ENCODE measurements at regions of chr16 and their contacts with region 1.

Region 1: GRCh38 chr16:28202147-28202746 is 9.5 kb downstream of the XPO6 start:
- DNase-seq: no peak
- H3K4me3 ChIP-seq: no peak overlapping the region
- H3K27ac ChIP-seq: no peak overlapping the region
- H3K4me1 ChIP-seq: no peaks in the 10 kb centered on the region
- H3K27me3 ChIP-seq: no peaks in the 10 kb centered on the region
- CTCF ChIP-seq: no peak
- POLR2A ChIP-seq: no peak

Region 2: GRCh38 chr16:28164140-28164539 is 38.1 kb before region 1 on chr16:
- CTCF ChIA-PET with region 1: interaction called, 3 read pairs
- POLR2A ChIA-PET with region 1: no interaction called
- dilution Hi-C with region 1: no loop called
- intact Hi-C with region 1: loop called (anchors 5 kb)
- DNase-seq: peak; percentile 11
- H3K4me3 ChIP-seq: no peak overlapping the region
- H3K27ac ChIP-seq: no peak overlapping the region
- H3K4me1 ChIP-seq: no peaks in the 10 kb centered on the region
- H3K27me3 ChIP-seq: no peaks in the 10 kb centered on the region
- CTCF ChIP-seq: no peak
- POLR2A ChIP-seq: no peak

Region 3: GRCh38 chr16:28187595-28188004 is 14.6 kb before region 1 on chr16:
- CTCF ChIA-PET with region 1: interaction called, 3 read pairs
- POLR2A ChIA-PET with region 1: no interaction called
- dilution Hi-C with region 1: no loop called
- intact Hi-C with region 1: loop called (anchors 1 kb)
- DNase-seq: no peak
- H3K4me3 ChIP-seq: no peak overlapping the region
- H3K27ac ChIP-seq: no peak overlapping the region
- H3K4me1 ChIP-seq: no peaks in the 10 kb centered on the region
- H3K27me3 ChIP-seq: no peaks in the 10 kb centered on the region
- CTCF ChIP-seq: no peak
- POLR2A ChIP-seq: no peak

Region 4: DNA sequence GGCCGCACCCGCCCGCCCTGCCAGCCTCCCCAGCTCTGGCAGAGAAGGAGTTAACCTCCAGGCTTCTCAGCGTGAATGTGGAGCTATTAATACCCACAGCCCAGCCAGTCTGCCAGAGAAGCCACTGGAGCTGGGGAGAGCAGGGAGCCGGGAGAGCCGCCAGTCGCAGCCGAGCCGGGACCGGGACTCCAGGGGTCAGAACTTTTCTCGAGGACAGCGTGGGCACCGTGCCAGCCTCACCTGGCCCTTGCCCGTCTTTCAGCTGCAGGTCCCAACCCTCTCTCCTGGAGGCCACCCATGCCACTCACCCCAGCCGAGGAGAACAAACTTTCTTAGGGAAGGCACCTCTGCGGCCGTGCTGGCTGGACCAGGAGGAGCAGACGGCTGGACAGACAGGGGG is 56.3 kb after region 1 on chr16:
- CTCF ChIA-PET with region 1: no interaction called
- POLR2A ChIA-PET with region 1: no interaction called
- dilution Hi-C with region 1: no loop called
- intact Hi-C with region 1: no loop called
- DNase-seq: no peak
- H3K4me3 ChIP-seq: no peak overlapping the region
- H3K27ac ChIP-seq: no peak overlapping the region
- H3K4me1 ChIP-seq: no peaks in the 10 kb centered on the region
- H3K27me3 ChIP-seq: peaks cover 2 to 3% of the 10 kb centered on the region in 2 experiments
- CTCF ChIP-seq: no peak
- POLR2A ChIP-seq: no peak

Measured in endothelial cell of umbilical vein (primary cell).